Activated B cell treated with CpG ODN at 0.5 μM for 24 hours (primary cell): ENCODE measurements at regions of chr4 and their contacts with region 1.

Region 1: DNA sequence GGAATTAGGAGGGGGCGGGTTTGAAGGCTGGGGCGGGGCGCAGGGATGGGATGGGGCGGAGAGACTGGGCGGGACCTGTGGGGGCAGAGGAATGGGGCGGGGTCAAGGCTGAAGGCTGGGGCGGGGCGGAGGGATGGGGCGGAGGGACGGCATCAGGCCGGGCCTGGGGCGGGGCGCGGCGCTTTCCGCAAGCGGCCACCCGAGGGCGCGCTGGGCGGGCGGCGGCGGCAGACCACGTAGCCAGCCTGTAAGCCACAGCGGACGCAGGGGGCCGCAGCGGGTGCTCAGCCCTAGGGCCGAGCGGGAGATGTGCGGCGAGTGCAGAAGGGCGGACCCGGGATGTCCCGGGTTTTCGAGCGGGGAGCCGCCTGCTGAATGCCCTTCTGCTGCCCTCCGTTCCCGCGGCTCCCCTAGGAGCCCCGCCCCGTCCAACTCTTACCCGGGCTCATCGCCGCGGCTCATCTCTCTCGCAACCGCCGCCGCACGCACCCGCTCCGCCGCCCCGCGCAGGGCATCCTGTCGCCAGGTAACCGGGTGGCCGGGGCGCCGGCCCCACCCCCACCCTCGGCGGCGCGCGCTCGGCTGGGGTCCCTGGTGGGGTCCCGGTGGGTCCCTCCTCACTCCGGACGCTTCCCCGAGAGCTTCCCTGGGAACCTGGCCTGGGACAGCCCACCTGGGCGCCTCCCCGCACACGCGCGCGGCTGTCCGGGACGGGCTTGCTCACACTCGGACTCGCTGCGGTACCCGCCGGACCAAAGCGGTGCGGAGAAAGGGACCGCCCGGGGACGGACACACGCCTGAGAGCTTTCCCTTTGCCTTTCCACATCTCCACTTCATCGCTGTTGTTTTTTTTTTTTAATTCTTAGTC is at the start of gene CCDC110:
- DNase-seq: peak; percentile 87
- ATAC-seq: peak; percentile 95
- H3K4me3 Mint-ChIP-seq: peak within 1 kb of the TSS; percentile 88
- H3K27ac Mint-ChIP-seq: peak within 1 kb of the TSS; percentile 80
- H3K4me1 Mint-ChIP-seq: peaks cover 18% of the 10 kb centered on the region
- H3K27me3 Mint-ChIP-seq: no peaks in the 10 kb centered on the region
- CTCF ChIP-seq: no peak
- total RNA-seq, gene CCDC110: 0.33 and 0.71 TPM in 2 replicates

Region 2: DNA sequence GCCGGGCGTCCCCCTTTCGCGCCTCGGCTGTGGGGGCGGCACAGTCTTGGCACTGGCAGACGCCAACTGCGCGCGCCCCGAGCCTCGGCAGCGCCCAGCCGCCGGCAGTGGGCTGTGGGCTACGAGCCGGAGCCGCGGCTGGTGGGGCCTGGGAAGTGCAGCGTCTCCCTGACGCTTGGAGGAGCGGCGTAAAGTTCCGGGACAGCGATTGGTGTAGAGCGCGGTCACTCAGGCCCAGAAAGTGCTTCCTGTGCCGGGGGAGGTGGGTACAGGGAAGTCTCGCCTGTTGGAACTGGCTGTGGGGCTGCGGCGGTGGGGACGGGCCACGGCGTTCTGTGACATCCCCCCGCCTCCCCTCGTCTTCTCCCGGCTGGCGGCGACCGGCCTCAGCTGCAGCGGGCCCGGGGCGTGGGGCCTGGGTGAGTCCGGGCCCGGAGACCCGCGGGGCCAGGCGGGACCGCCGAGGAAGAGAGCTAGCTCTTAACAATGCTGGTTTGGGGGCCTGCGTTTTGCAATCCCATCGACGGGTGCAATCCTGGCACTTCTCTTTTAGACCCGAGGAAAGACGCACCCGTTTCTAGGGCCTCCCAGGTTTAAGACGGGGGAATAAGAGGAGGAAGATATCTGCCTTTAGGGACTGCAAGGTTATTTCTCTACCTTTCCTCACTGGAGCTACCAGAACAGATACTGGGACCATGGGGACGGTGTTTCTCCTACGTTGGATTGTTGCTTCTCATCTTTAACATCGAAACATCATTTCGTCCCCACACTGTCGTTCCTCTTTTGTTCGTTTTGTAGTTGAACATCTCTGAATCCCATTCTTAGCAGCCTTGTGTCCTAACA is 1812.2 kb before region 1 on chr4 and contains the starts of genes RWDD4 and TRAPPC11:
- CTCF ChIA-PET with region 1: no interaction called
- POLR2A ChIA-PET with region 1: no interaction called
- intact Hi-C with region 1: loop called (anchors 2 kb)
- DNase-seq: peak; percentile 87
- ATAC-seq: peak; percentile 98
- H3K4me3 Mint-ChIP-seq: peak within 1 kb of the TSS; percentile 93
- H3K27ac Mint-ChIP-seq: peak within 1 kb of the TSS; percentile 92
- H3K4me1 Mint-ChIP-seq: peaks cover 33% of the 10 kb centered on the region
- H3K27me3 Mint-ChIP-seq: no peaks in the 10 kb centered on the region
- CTCF ChIP-seq: no peak
- total RNA-seq, gene RWDD4: 14.6 and 15.4 TPM in 2 replicates
- total RNA-seq, gene TRAPPC11: 42.9 and 45.2 TPM in 2 replicates

Region 3: GRCh38 chr4:184860018-184860779 is 611.3 kb before region 1 on chr4:
- CTCF ChIA-PET with region 1: no interaction called
- POLR2A ChIA-PET with region 1: no interaction called
- intact Hi-C with region 1: no loop called
- DNase-seq: no peak
- ATAC-seq: no peak
- H3K4me3 Mint-ChIP-seq: no peak overlapping the region
- H3K27ac Mint-ChIP-seq: peak overlapping the region; percentile 31
- H3K4me1 Mint-ChIP-seq: peaks cover 39% of the 10 kb centered on the region
- H3K27me3 Mint-ChIP-seq: no peaks in the 10 kb centered on the region
- CTCF ChIP-seq: no peak

Region 4: GRCh38 chr4:184896868-184897715 is 574.4 kb before region 1 on chr4:
- CTCF ChIA-PET with region 1: no interaction called
- POLR2A ChIA-PET with region 1: no interaction called
- intact Hi-C with region 1: no loop called
- DNase-seq: peak; percentile 38
- ATAC-seq: peak; percentile 84
- H3K4me3 Mint-ChIP-seq: peak overlapping the region; percentile 78
- H3K27ac Mint-ChIP-seq: peak overlapping the region; percentile 80
- H3K4me1 Mint-ChIP-seq: peaks cover 45% of the 10 kb centered on the region
- H3K27me3 Mint-ChIP-seq: peaks cover 9% of the 10 kb centered on the region
- CTCF ChIP-seq: no peak

Region 5: GRCh38 chr4:185203486-185204237 is 267.8 kb before region 1 on chr4 and contains the start of gene CFAP97:
- CTCF ChIA-PET with region 1: no interaction called
- POLR2A ChIA-PET with region 1: no interaction called
- intact Hi-C with region 1: loop called (anchors 1 kb)
- DNase-seq: peak; percentile 82
- ATAC-seq: peak; percentile 81
- H3K4me3 Mint-ChIP-seq: peak within 1 kb of the TSS; percentile 93
- H3K27ac Mint-ChIP-seq: peak within 1 kb of the TSS; percentile 97
- H3K4me1 Mint-ChIP-seq: peaks cover 47% of the 10 kb centered on the region
- H3K27me3 Mint-ChIP-seq: no peaks in the 10 kb centered on the region
- CTCF ChIP-seq: no peak
- total RNA-seq, gene CFAP97: 42.6 and 44.1 TPM in 2 replicates

Region 6: DNA sequence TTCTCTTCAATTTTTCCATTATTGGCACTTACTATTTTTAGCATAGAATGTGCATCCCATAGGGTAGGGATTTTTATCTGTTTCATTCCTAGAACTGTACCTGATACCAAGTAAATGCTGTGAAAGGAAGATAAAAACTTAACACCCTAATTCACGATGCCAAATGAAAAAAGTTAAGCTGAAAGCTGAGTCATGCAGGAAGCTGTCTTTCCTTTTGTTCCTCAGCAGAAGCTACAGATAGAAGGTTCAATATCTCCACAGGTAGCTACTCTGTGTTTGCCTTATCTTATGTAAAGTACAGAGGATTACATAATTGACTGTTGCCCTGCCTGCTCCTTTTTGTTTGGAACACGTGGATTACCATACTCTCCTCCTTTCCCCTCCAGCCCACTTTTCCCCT is 152.8 kb before region 1 on chr4:
- CTCF ChIA-PET with region 1: no interaction called
- POLR2A ChIA-PET with region 1: no interaction called
- intact Hi-C with region 1: no loop called
- DNase-seq: no peak
- ATAC-seq: no peak
- H3K4me3 Mint-ChIP-seq: no peak overlapping the region
- H3K27ac Mint-ChIP-seq: no peak overlapping the region
- H3K4me1 Mint-ChIP-seq: peaks cover 1% of the 10 kb centered on the region
- H3K27me3 Mint-ChIP-seq: no peaks in the 10 kb centered on the region
- CTCF ChIP-seq: no peak

Region 7: DNA sequence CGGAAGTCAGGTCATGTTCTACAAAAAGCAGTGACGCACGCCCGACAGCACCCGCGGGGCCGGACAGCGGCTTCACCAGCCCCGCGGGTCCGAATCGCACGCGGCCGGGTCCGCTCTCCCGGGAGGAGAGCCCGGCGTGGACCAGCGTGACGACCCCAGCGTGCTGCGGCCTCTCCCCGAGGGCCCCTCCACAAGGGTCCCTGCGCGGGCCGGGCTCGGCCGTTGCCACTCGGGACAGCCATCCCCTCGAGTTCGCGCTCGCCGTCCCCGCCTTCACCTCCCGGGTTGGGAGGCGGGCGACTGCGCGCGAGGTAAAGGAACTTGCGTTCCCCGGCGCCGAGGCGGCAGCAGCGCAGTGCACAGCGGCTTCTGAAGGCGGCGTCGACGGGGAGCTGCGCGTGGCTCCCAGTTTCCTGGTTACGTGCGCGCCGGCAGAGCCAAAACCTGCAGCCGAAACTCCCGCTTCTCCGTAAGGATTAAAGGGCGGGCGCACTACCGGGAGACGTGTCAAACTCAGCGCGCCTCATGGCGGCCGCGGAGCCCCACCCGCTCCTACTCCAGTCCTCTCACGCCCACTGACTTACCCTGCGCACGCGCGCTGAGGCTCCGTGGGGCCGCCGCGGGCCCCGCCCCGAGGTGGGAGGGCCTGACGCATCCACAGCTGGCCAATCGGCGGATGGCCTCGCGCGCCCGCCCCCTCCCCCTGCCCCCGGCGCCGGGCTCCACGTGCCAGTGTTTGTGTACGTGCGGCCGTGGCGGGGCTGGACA is 75.3 kb before region 1 on chr4:
- CTCF ChIA-PET with region 1: no interaction called
- POLR2A ChIA-PET with region 1: interaction called, 3 read pairs
- intact Hi-C with region 1: loop called (anchors 1 kb)
- DNase-seq: peak; percentile 98
- ATAC-seq: peak; percentile 89
- H3K4me3 Mint-ChIP-seq: peak overlapping the region; percentile 94
- H3K27ac Mint-ChIP-seq: peak overlapping the region; percentile 94
- H3K4me1 Mint-ChIP-seq: peaks cover 63% of the 10 kb centered on the region
- H3K27me3 Mint-ChIP-seq: no peaks in the 10 kb centered on the region
- CTCF ChIP-seq: no peak

Region 8: DNA sequence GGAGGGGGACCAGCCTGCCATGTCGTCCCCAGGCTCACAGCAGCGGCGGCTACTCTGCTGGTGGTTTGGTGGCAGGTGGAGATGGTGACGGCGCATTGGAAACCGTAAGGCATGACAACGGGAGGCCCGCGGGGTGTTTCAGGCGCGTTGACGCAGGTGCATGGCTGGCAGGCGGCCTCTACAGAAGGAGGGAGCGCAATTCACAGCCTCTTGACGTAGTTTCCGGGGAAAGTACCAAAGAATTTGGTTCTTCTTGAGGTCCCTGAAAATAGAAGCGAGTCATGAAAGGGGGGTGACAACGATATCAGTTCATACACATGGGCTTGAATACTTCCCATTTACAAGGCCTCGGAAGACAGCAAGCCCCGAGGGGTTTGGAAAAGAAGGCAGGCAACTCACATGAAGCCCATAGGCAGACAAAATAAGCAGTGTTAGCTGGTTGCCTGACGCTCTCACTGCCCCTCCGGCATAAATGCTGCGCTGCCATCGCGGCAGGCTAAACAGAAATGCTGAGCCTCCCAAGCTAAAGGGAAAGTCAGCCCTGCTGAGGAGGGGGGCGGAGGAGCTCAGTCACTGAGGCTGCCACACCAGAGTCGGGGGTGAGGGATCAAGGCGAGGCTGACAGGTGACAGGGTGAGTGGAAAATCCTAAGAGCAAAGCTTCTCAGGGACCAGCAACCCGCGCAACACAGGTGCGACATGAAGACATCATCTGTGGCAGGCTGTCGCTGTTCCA is 116.1 kb after region 1 on chr4:
- CTCF ChIA-PET with region 1: interaction called, 3 read pairs
- POLR2A ChIA-PET with region 1: interaction called, 6 read pairs
- intact Hi-C with region 1: loop called (anchors 1 kb)
- DNase-seq: peak; percentile 66
- ATAC-seq: peak; percentile 92
- H3K4me3 Mint-ChIP-seq: peak overlapping the region; percentile 82
- H3K27ac Mint-ChIP-seq: peak overlapping the region; percentile 95
- H3K4me1 Mint-ChIP-seq: peaks cover 20% of the 10 kb centered on the region
- H3K27me3 Mint-ChIP-seq: peaks cover 26% of the 10 kb centered on the region
- CTCF ChIP-seq: no peak

Region 9: GRCh38 chr4:186037692-186038658 is 566.5 kb after region 1 on chr4:
- CTCF ChIA-PET with region 1: no interaction called
- POLR2A ChIA-PET with region 1: no interaction called
- intact Hi-C with region 1: loop called (anchors 5 kb)
- DNase-seq: no peak
- ATAC-seq: peak; percentile 60
- H3K4me3 Mint-ChIP-seq: no peak overlapping the region
- H3K27ac Mint-ChIP-seq: no peak overlapping the region
- H3K4me1 Mint-ChIP-seq: no peaks in the 10 kb centered on the region
- H3K27me3 Mint-ChIP-seq: peaks cover 28% of the 10 kb centered on the region
- CTCF ChIP-seq: peak; percentile 41

Region 10: GRCh38 chr4:187006189-187006618 is 1534.7 kb after region 1 on chr4:
- CTCF ChIA-PET with region 1: no interaction called
- POLR2A ChIA-PET with region 1: no interaction called
- intact Hi-C with region 1: no loop called
- DNase-seq: no peak
- ATAC-seq: no peak
- H3K4me3 Mint-ChIP-seq: no peak overlapping the region
- H3K27ac Mint-ChIP-seq: no peak overlapping the region
- H3K4me1 Mint-ChIP-seq: no peaks in the 10 kb centered on the region
- H3K27me3 Mint-ChIP-seq: no peaks in the 10 kb centered on the region
- CTCF ChIP-seq: no peak